ENCODE measurements at regions of chr1 and their contacts with region 1.

Region 1: GRCh38 chr1:184386312-184387068 is at the start of gene C1orf21:
- DNase-seq: peak; percentile 92
- ATAC-seq: peak; percentile 95 to 98 (median 96)
- H3K4me3 ChIP-seq: peak within 1 kb of the TSS; percentile 42 to 97 (median 86)
- H3K27ac ChIP-seq: peak within 1 kb of the TSS; percentile 77 to 95 (median 90)
- H3K4me1 ChIP-seq: peaks cover 0 to 43% (median 34%) of the 10 kb centered on the region in 9 donors
- H3K27me3 ChIP-seq: peaks cover 0 to 10% (median 0%) of the 10 kb centered on the region in 7 donors
- CTCF ChIP-seq: no peak
- total RNA-seq, gene C1orf21: 50.8 to 76.7 (median 69.3) TPM

Region 2: DNA sequence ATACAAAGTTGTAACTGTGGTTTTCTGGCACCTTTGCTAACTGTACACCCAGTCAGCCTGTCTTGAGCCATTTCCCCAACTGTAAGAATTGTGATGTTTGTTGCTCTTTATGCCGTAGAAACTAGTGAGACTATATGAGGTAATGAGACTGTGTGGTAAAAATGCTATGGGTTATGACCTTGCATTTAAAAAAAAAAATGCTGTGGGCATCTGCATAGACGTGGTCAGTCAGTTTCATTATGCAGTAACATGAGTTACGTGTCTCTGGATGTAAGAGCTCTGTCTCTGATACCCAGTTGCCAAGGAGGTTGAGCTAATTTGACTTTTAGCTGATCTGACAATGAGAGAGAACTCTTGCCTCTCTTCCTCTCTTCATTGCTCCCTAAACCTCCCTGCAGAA is 1281.0 kb before region 1 on chr1:
- intact Hi-C with region 1: no loop called
- DNase-seq: no peak
- ATAC-seq: peak in 4 of 8 donors; percentile 22 to 37 (median 30)
- H3K4me3 ChIP-seq: no peak overlapping the region
- H3K27ac ChIP-seq: peak overlapping the region in 2 of 10 donors; percentile 3 to 54
- H3K4me1 ChIP-seq: peaks cover 0 to 82% (median 59%) of the 10 kb centered on the region in 9 donors
- H3K27me3 ChIP-seq: no peaks in the 10 kb centered on the region
- CTCF ChIP-seq: no peak

Region 3: DNA sequence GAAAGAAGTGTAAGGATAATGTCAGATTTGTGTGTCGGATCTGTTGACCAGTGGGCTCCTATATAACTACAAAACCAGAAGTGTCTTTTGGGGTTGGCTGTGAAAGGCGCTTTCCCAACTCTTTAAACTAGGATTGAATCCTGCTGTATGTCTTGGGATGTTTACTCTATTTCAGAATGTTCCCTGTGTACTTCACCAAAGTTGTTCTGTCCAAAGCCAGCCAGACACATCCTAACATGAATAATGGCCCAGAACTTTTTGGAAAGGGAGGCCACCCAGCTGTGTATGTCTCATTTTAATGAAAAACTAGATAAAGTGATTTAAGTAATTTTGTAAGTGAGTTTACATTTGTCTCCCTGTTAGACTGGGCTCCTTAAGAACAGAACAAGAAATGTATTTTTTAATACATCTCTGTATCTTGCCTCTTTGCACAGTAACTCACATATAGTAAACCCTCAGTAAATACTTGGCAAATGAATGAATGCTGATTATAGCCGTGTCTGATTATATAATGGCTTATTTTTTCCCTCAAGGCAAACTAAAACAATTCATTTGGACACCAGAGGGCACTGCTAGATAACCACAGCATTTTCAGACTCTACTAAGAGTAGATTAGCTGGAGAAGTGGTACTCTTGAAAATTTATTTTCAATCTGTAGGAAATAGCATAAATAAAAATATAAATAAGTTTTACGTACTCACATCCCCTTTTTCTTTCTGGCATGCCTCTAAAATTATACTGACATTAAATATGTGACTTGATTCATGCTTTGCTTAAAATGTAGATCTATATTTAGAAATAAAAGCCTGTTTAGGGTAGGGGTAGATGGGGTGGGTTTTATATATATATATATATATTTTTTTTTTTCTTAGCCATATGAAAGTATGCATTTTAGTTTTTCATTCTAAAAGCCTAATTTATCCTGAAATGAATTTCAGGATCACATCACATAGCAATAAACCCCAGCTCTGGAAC is 311.1 kb before region 1 on chr1:
- intact Hi-C with region 1: loop called in 3 of 10 experiments (anchors 5 to 10 kb)
- DNase-seq: peak in 1 of 2 donors; percentile 67
- ATAC-seq: peak; percentile 65 to 91 (median 84)
- H3K4me3 ChIP-seq: no peak overlapping the region
- H3K27ac ChIP-seq: peak overlapping the region in 7 of 10 donors; percentile 2 to 69 (median 46)
- H3K4me1 ChIP-seq: peaks cover 0 to 29% (median 9%) of the 10 kb centered on the region in 9 donors
- H3K27me3 ChIP-seq: no peaks in the 10 kb centered on the region
- CTCF ChIP-seq: peak; percentile 55 to 91 (median 79)

Region 4: DNA sequence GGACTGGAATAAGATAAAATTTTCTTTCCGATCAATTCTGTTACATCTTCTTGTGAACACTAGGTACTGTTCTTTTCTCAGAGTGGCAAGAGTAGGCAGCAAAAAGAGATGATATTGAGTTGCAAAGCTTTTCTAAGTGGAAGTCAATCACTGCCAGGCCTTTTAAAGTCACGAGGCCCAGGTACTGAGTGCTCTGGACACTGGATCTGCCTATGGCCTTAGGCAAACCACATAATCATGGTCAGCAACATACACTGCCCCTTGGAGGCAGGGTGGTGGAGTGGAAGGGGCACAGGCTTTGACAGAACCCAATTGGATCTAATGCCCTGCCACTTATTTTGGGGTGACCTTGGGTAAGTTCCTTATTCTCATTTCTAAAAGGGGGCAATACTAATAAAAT is 293.4 kb before region 1 on chr1:
- intact Hi-C with region 1: no loop called
- DNase-seq: no peak
- ATAC-seq: peak in 1 of 8 donors; percentile 55
- H3K4me3 ChIP-seq: no peak overlapping the region
- H3K27ac ChIP-seq: no peak overlapping the region
- H3K4me1 ChIP-seq: peaks cover 0 to 10% (median 0%) of the 10 kb centered on the region in 9 donors
- H3K27me3 ChIP-seq: no peaks in the 10 kb centered on the region
- CTCF ChIP-seq: no peak

Region 5: GRCh38 chr1:184255560-184255959 is 130.9 kb before region 1 on chr1:
- intact Hi-C with region 1: loop called in 1 of 10 experiments (anchors 5 kb)
- DNase-seq: no peak
- ATAC-seq: peak in 2 of 8 donors; percentile 38 to 55
- H3K4me3 ChIP-seq: no peak overlapping the region
- H3K27ac ChIP-seq: peak overlapping the region in 1 of 10 donors; percentile 24
- H3K4me1 ChIP-seq: peaks cover 0 to 27% (median 13%) of the 10 kb centered on the region in 9 donors
- H3K27me3 ChIP-seq: no peaks in the 10 kb centered on the region
- CTCF ChIP-seq: no peak

Region 6: GRCh38 chr1:184270556-184270955 is 115.9 kb before region 1 on chr1:
- intact Hi-C with region 1: no loop called
- DNase-seq: no peak
- ATAC-seq: peak in 1 of 8 donors; percentile 68
- H3K4me3 ChIP-seq: no peak overlapping the region
- H3K27ac ChIP-seq: no peak overlapping the region
- H3K4me1 ChIP-seq: no peaks in the 10 kb centered on the region
- H3K27me3 ChIP-seq: no peaks in the 10 kb centered on the region
- CTCF ChIP-seq: no peak

Region 7: DNA sequence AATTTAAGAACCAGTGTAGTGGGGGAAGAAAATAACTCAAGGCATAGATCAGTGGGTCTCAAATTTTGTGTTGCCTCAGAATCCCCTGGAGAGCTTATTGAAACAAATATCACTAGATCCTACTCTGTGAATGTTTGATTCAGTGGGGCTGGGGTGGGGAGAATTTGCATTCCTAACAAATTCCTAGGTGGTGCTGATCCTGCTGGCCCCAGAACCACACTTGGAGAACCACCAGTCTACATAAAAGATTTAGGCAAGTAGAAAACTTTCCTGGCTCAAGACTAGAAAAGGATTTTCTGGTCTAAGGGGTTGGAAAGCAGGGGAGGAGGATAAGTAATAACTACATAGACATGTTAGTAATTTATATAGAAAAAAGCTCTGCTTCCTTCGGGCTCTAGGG is 33.7 kb before region 1 on chr1:
- intact Hi-C with region 1: no loop called
- DNase-seq: no peak
- ATAC-seq: no peak
- H3K4me3 ChIP-seq: no peak overlapping the region
- H3K27ac ChIP-seq: no peak overlapping the region
- H3K4me1 ChIP-seq: no peaks in the 10 kb centered on the region
- H3K27me3 ChIP-seq: no peaks in the 10 kb centered on the region
- CTCF ChIP-seq: no peak

Region 8: DNA sequence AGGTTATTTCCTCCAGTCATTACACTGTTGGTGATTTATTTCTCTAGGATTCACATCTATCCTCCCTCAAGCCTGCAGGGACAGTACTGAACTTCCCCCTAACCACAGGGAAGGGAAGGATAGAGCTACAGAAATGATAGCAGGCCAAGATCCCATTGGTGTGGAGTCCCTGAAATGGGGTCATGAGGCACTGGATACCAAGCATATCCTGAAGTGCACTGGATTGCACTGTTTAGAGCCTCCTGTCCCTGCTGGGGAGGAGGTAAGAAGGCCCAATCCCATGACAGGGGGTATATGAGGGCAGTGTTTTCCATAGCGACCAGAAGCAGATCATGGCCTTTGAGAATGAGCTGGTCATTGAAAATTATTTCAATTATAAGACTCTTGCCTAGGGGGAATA is 57.1 kb after region 1 on chr1:
- intact Hi-C with region 1: loop called in 1 of 10 experiments (anchors 5 kb)
- DNase-seq: no peak
- ATAC-seq: peak in 6 of 8 donors; percentile 16 to 58 (median 36)
- H3K4me3 ChIP-seq: no peak overlapping the region
- H3K27ac ChIP-seq: peak overlapping the region in 1 of 10 donors; percentile 26
- H3K4me1 ChIP-seq: peaks cover 7 to 55% (median 34%) of the 10 kb centered on the region in 9 donors
- H3K27me3 ChIP-seq: no peaks in the 10 kb centered on the region
- CTCF ChIP-seq: no peak

Region 9: DNA sequence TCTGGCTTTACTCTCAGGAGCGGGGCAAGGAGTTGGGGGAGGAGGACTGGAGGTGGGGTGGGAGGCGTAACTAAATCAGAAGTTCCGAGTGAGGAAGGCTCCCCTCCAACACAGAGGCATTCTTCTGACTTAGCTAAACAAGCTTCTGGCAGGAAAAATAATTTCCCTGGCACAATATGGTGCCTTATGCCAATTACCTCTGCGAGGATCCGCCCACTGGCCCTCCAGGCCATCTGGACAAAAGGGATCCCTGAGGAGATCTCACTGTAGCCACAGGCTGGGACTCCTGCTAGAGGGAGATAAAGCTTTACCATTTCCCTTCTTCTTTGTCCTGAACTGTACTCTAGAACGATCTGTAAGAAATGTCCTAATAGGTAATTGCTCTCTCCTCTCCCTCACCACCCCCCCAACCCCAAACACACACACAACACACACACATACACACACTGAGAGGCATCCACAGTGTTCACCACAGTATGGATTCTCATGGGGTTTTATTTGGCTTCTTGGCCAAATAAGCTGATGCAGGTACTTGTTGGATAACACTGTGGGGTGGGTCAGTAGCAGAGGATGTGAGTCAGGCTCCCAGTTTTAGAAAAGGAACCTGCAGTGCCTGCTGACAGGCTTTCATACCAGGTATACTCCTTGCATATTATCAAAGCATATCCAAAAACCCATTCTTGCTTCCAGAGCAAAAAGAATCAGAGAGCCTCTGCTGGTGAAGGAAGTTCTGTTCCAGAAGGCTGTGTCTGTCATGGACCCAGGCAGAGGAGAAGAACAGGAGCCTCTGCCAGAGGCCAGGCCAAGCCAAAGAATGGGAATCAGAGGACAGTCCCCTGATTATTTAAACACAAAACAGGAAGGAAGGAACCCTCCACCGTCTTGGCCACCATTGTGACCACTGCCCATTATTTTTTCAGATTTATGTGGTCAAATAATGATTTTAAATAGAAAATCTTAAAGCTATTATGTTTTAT is 169.5 kb after region 1 on chr1:
- intact Hi-C with region 1: loop called in 7 of 10 experiments (anchors 2 to 10 kb)
- DNase-seq: no peak
- ATAC-seq: peak; percentile 45 to 74 (median 67)
- H3K4me3 ChIP-seq: no peak overlapping the region
- H3K27ac ChIP-seq: peak overlapping the region; percentile 11 to 82 (median 64)
- H3K4me1 ChIP-seq: peaks cover 7 to 55% (median 33%) of the 10 kb centered on the region in 9 donors
- H3K27me3 ChIP-seq: no peaks in the 10 kb centered on the region
- CTCF ChIP-seq: peak in 1 of 9 donors; percentile 8

Measured in heart right ventricle (tissue), 16 donors.